Calu3 (cell line): ENCODE measurements at regions of chr2 and their contacts with region 1.

Region 1: GRCh38 chr2:109545828-109546713 is 67.7 kb downstream of the SEPTIN10 start:
- DNase-seq: peak; percentile 66
- H3K4me3 Mint-ChIP-seq: no peak overlapping the region
- H3K27ac Mint-ChIP-seq: no peak overlapping the region
- H3K4me1 Mint-ChIP-seq: no peaks in the 10 kb centered on the region
- H3K27me3 Mint-ChIP-seq: no peaks in the 10 kb centered on the region
- CTCF ChIP-seq: peak; percentile 80

Region 2: DNA sequence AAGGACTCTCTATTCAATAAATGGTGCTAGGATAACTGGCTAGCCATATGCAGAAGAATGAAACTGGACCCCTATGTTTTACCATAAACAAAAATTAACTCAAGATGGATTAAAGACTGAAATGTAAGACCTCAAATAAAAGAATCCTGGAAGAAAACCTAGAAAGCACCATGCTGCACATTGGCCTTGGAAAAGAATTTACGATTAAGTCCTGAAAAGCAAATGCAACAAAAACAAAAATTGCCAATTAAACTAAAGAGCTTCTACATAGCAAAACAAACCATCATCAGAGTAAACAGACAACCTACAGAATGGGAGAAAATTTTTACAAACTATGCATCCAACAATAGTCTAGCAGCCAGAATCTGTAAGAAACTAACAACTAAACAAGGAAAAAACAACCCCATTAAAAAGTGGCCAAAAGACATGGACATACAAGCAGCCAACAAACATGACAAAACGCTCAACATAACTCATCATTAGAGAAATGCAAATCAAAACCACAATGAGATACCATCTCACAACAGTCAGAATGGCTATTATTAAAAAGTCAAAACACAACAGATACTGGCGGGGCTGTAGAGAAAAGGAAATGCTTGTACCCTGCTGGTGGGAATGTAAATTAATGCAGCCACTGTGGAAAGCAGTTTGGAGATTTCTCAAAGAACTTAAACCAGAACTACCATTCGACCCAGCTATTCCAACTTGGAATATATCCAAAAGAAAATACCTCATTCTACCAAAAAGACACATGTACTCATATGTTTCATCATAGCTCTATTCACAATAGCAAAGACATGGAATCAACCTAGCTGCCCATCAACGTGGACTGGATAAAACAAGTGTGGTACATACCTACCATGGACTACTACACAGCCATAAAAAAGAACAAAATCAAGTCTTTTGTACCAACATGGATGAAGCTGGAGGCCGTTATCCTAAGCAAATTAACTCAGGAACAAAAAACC is 37.1 kb after region 1 on chr2:
- CTCF ChIA-PET with region 1: no interaction called
- intact Hi-C with region 1: no loop called
- DNase-seq: no peak
- H3K4me3 Mint-ChIP-seq: no peak overlapping the region
- H3K27ac Mint-ChIP-seq: no peak overlapping the region
- H3K4me1 Mint-ChIP-seq: no peaks in the 10 kb centered on the region
- H3K27me3 Mint-ChIP-seq: no peaks in the 10 kb centered on the region
- CTCF ChIP-seq: no peak

Region 3: GRCh38 chr2:109663721-109664120 is 117.7 kb after region 1 on chr2:
- CTCF ChIA-PET with region 1: no interaction called
- intact Hi-C with region 1: loop called (anchors 5 kb)
- DNase-seq: no peak
- H3K4me3 Mint-ChIP-seq: no peak overlapping the region
- H3K27ac Mint-ChIP-seq: no peak overlapping the region
- H3K4me1 Mint-ChIP-seq: no peaks in the 10 kb centered on the region
- H3K27me3 Mint-ChIP-seq: peaks cover 9% of the 10 kb centered on the region
- CTCF ChIP-seq: no peak

Region 4: GRCh38 chr2:109715313-109715805 is 169.3 kb after region 1 on chr2:
- CTCF ChIA-PET with region 1: interaction called, 11 read pairs
- intact Hi-C with region 1: loop called (anchors 2 kb)
- DNase-seq: peak; percentile 45
- H3K4me3 Mint-ChIP-seq: no peak overlapping the region
- H3K27ac Mint-ChIP-seq: no peak overlapping the region
- H3K4me1 Mint-ChIP-seq: no peaks in the 10 kb centered on the region
- H3K27me3 Mint-ChIP-seq: no peaks in the 10 kb centered on the region
- CTCF ChIP-seq: peak; percentile 56

Region 5: DNA sequence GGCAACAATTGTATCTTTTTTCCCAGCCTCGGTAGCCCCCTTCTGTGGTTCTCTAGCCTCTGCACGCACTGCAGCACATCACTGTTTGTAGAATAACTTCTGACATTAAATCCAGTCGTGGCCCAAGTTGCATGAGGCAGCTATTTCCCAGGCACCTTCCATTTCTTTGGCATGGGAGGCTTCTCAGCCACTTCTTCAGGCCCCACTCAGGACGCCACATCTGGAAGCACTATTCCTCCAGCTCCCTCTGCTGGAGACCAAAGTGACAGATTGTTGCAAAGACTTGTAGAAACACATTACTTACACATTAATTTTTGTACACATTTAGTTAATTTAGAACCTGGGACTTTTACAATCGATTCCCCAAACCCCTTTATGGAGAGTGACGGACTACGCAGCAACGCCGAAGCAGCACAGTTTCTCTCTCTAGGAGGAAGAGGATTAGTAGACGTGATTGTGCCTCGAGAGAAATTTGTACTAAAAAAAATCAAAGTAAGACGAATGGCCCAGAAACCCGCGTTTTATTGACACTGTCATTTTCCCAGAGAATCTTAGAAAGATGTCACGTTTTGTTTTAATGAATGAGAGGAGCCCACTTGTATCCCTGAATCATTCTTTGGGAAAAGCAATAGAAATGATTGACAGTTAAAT is 190.2 kb after region 1 on chr2:
- CTCF ChIA-PET with region 1: interaction called, 12 read pairs
- intact Hi-C with region 1: loop called (anchors 1 kb)
- DNase-seq: peak; percentile 54
- H3K4me3 Mint-ChIP-seq: no peak overlapping the region
- H3K27ac Mint-ChIP-seq: no peak overlapping the region
- H3K4me1 Mint-ChIP-seq: no peaks in the 10 kb centered on the region
- H3K27me3 Mint-ChIP-seq: no peaks in the 10 kb centered on the region
- CTCF ChIP-seq: peak; percentile 79